CD4-positive, alpha-beta memory T cell (primary cell): ENCODE measurements at regions of chr5 and their contacts with region 1.

Region 1: GRCh38 chr5:95781101-95781583 is 41.4 kb downstream of the GLRX start:
- DNase-seq: peak; percentile 62 to 73 (median 71)
- H3K4me3 ChIP-seq: no peak overlapping the region
- H3K4me3 Mint-ChIP-seq: peak overlapping the region in 7 of 8 donors; percentile 18 to 84 (median 72)
- H3K27ac ChIP-seq: no peak overlapping the region
- H3K27ac Mint-ChIP-seq: peak overlapping the region in 3 of 7 donors; percentile 9 to 82 (median 24)
- H3K4me1 ChIP-seq: no peaks in the 10 kb centered on the region
- H3K4me1 Mint-ChIP-seq: peaks cover 2 to 7% (median 6%) of the 10 kb centered on the region in 4 donors
- H3K27me3 ChIP-seq: no peaks in the 10 kb centered on the region
- H3K27me3 Mint-ChIP-seq: peaks cover 0 to 2% of the 10 kb centered on the region in 2 donors

Region 2: DNA sequence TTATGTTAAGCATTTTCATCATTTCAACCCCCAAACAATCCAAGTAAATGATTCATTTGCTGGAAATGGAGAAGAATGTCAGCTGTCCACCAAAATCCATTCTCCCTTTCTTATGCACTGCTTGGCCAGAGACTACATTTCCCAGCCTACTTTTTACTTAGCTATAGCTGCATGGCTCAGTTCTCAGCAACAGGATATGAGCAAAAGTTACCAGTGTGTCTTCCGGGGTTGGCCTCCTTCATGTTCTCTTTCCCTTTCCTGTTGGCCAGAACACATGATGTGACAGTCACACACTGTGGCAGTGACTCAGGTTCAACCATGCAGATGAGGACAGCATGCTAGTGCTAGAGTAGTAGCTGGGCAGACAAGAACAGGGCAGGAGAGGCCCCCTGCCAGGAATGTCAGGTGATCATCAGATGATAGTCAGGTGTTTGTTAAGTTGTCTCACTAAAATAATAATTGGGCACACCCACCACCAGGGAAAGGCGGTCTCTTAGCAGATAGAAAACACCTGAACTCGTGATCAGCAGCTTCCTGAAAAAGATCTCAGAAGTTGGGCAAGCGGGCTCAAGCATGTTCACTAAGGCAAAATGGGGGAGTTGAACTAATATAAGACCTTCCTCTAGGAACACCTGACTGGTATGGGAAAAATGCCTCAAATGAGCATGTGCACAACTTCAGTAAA is 149.0 kb before region 1 on chr5:
- CTCF ChIA-PET with region 1: interaction called, 11 read pairs
- POLR2A ChIA-PET with region 1: no interaction called
- intact Hi-C with region 1: no loop called
- DNase-seq: peak; percentile 74 to 92 (median 84)
- H3K4me3 ChIP-seq: peak overlapping the region in 1 of 2 donors; percentile 5
- H3K4me3 Mint-ChIP-seq: peak overlapping the region; percentile 36 to 80 (median 55)
- H3K27ac ChIP-seq: peak overlapping the region; percentile 56
- H3K27ac Mint-ChIP-seq: peak overlapping the region; percentile 90 to 99 (median 96)
- H3K4me1 ChIP-seq: peaks cover 15% of the 10 kb centered on the region
- H3K4me1 Mint-ChIP-seq: peaks cover 16 to 43% (median 26%) of the 10 kb centered on the region in 4 donors
- H3K27me3 ChIP-seq: no peaks in the 10 kb centered on the region
- H3K27me3 Mint-ChIP-seq: peaks cover 0 to 6% of the 10 kb centered on the region in 2 donors

Region 3: GRCh38 chr5:95730730-95731570 is 50.2 kb before region 1 on chr5 and contains the start of gene RHOBTB3:
- CTCF ChIA-PET with region 1: interaction called, 10 read pairs
- POLR2A ChIA-PET with region 1: no interaction called
- intact Hi-C with region 1: no loop called
- DNase-seq: peak; percentile 23 to 50 (median 33)
- H3K4me3 ChIP-seq: peak within 1 kb of the TSS; percentile 7 to 46
- H3K4me3 Mint-ChIP-seq: peak within 1 kb of the TSS; percentile 79 to 87 (median 84)
- H3K27ac ChIP-seq: no peak within 1 kb of the TSS
- H3K27ac Mint-ChIP-seq: peak within 1 kb of the TSS in 1 of 7 donors; percentile 3
- H3K4me1 ChIP-seq: peaks cover 17% of the 10 kb centered on the region
- H3K4me1 Mint-ChIP-seq: peaks cover 1 to 25% (median 19%) of the 10 kb centered on the region in 4 donors
- H3K27me3 ChIP-seq: peaks cover 17% of the 10 kb centered on the region
- H3K27me3 Mint-ChIP-seq: peaks cover 31 to 36% of the 10 kb centered on the region in 2 donors
- total RNA-seq, gene RHOBTB3: 0.32 to 0.61 TPM

Region 4: GRCh38 chr5:95808686-95809413 is 27.7 kb after region 1 on chr5:
- CTCF ChIA-PET with region 1: interaction called, 116 read pairs
- POLR2A ChIA-PET with region 1: interaction called, 12 read pairs
- intact Hi-C with region 1: loop called (anchors 1 kb)
- DNase-seq: peak; percentile 77 to 94 (median 88)
- H3K4me3 ChIP-seq: no peak overlapping the region
- H3K4me3 Mint-ChIP-seq: peak overlapping the region; percentile 57 to 87 (median 72)
- H3K27ac ChIP-seq: peak overlapping the region; percentile 67
- H3K27ac Mint-ChIP-seq: peak overlapping the region; percentile 66 to 95 (median 91)
- H3K4me1 ChIP-seq: peaks cover 59% of the 10 kb centered on the region
- H3K4me1 Mint-ChIP-seq: peaks cover 46 to 66% (median 56%) of the 10 kb centered on the region in 4 donors
- H3K27me3 ChIP-seq: no peaks in the 10 kb centered on the region
- H3K27me3 Mint-ChIP-seq: no peaks in the 10 kb centered on the region

Region 5: DNA sequence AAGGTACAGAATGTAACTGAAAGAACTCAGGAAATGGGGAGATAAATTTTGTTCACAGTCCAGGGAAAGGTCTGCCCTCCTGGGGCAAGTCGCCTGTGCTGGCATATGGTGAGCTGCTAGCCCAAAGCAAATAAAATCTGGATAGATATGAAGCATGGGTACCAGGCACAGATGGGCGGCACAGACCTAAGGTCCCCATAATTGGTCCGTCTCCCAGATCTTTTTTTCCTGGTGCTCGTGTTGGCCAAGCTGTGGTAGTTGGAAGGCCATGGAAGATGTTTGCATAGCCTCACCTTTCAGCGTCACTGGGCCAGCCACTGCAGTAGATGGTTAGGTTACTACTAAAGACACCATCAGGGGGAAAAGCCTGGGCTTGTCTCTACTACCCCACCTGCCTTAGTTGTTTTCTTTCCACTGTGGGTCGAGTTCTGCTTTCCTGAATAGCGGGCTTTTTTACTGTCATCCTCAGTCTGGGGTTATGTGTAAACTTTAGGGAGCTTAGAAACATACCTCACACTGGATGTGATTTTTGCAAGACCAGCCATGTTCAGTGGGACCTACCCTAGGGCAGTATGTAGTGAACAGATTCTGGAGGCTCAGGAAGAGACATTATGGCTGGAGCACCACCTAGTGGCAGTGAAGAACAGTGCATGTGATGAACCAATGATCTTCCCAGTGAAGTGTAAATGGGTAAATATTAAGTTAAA is 65.6 kb after region 1 on chr5:
- CTCF ChIA-PET with region 1: interaction called, 902 read pairs
- POLR2A ChIA-PET with region 1: interaction called, 17 read pairs
- intact Hi-C with region 1: loop called (anchors 1 kb)
- DNase-seq: peak; percentile 66 to 70 (median 69)
- H3K4me3 ChIP-seq: no peak overlapping the region
- H3K4me3 Mint-ChIP-seq: no peak overlapping the region
- H3K27ac ChIP-seq: no peak overlapping the region
- H3K27ac Mint-ChIP-seq: peak overlapping the region in 2 of 7 donors; percentile 30 to 32
- H3K4me1 ChIP-seq: peaks cover 20% of the 10 kb centered on the region
- H3K4me1 Mint-ChIP-seq: peaks cover 14 to 30% (median 19%) of the 10 kb centered on the region in 4 donors
- H3K27me3 ChIP-seq: no peaks in the 10 kb centered on the region
- H3K27me3 Mint-ChIP-seq: no peaks in the 10 kb centered on the region

Region 6: GRCh38 chr5:96336351-96336985 is 555.3 kb after region 1 on chr5:
- CTCF ChIA-PET with region 1: interaction called, 15 read pairs
- POLR2A ChIA-PET with region 1: no interaction called
- intact Hi-C with region 1: loop called (anchors 5 kb)
- DNase-seq: peak; percentile 61 to 70 (median 66)
- H3K4me3 ChIP-seq: no peak overlapping the region
- H3K4me3 Mint-ChIP-seq: no peak overlapping the region
- H3K27ac ChIP-seq: no peak overlapping the region
- H3K27ac Mint-ChIP-seq: no peak overlapping the region
- H3K4me1 ChIP-seq: no peaks in the 10 kb centered on the region
- H3K4me1 Mint-ChIP-seq: no peaks in the 10 kb centered on the region
- H3K27me3 ChIP-seq: peaks cover 7% of the 10 kb centered on the region
- H3K27me3 Mint-ChIP-seq: peaks cover 9% of the 10 kb centered on the region in 2 donors